ENCODE measurements at regions of chr11 and their contacts with region 1.

Region 1: DNA sequence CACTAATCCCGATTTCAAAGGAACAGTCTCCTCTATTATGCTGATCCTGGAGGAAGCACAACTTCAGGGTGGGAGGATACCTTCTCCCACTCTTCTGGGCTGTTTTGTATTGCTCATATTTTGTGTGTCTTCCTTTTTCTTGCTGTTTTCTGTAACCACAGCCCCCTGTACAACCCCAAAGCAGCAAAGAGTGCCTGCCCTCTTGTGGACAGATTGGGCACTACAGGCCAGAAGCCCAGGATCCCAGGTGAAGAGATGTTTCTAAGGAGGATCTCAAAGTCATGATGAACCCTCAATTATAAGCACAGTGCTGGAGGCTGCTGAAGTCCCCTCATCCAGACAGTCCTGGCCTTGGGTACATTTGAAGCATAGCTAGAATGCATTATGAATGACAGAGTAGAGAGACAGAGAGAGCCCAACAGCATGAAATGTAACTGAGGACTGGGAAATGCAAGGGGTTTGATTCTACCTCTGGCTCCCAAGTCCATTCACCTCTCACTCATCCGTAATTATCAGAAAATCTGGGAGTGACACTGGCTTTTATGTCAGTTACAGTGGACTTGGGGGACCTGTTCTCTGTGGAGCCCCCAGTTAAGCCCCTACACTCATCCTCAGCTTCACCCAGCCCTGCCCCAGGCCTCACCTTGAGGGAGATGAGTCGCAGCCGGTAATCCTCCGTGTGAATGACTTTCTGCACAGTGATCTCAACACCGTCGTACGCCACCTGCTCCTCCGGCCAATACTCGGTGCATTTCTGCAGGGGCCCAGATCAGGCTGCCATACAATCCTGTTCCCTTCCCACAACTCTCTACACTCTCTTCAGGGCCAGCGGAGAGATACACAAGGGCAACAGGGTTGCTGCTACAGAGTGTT is 6.2 kb upstream of the IGSF22 start:
- DNase-seq: peak in 1 of 2 experiments; percentile 90
- H3K4me3 ChIP-seq: no peak overlapping the region
- H3K27ac ChIP-seq: no peak overlapping the region
- H3K4me1 ChIP-seq: peaks cover 0 to 9% (median 3%) of the 10 kb centered on the region in 4 experiments; a peak in 5 of 7 replicates
- H3K27me3 ChIP-seq: no peaks in the 10 kb centered on the region
- CTCF ChIP-seq: peak; percentile 82 to 91 (median 86)
- EP300 ChIP-seq: no peak
- POLR2A ChIP-seq: no peak
- RAD21 ChIP-seq: peak; percentile 71 to 81

Region 2: GRCh38 chr11:18540207-18541009 is 191.8 kb before region 1 on chr11:
- CTCF ChIA-PET with region 1: interaction called, 10 read pairs
- POLR2A ChIA-PET with region 1: no interaction called
- DNase-seq: no peak
- H3K4me3 ChIP-seq: no peak overlapping the region
- H3K27ac ChIP-seq: no peak overlapping the region
- H3K4me1 ChIP-seq: no peaks in the 10 kb centered on the region
- H3K27me3 ChIP-seq: no peaks in the 10 kb centered on the region
- CTCF ChIP-seq: peak in 1 of 3 experiments; percentile 16; a peak in 1 of 4 replicates
- EP300 ChIP-seq: no peak
- POLR2A ChIP-seq: no peak
- RAD21 ChIP-seq: peak; percentile 48 to 55

Region 3: DNA sequence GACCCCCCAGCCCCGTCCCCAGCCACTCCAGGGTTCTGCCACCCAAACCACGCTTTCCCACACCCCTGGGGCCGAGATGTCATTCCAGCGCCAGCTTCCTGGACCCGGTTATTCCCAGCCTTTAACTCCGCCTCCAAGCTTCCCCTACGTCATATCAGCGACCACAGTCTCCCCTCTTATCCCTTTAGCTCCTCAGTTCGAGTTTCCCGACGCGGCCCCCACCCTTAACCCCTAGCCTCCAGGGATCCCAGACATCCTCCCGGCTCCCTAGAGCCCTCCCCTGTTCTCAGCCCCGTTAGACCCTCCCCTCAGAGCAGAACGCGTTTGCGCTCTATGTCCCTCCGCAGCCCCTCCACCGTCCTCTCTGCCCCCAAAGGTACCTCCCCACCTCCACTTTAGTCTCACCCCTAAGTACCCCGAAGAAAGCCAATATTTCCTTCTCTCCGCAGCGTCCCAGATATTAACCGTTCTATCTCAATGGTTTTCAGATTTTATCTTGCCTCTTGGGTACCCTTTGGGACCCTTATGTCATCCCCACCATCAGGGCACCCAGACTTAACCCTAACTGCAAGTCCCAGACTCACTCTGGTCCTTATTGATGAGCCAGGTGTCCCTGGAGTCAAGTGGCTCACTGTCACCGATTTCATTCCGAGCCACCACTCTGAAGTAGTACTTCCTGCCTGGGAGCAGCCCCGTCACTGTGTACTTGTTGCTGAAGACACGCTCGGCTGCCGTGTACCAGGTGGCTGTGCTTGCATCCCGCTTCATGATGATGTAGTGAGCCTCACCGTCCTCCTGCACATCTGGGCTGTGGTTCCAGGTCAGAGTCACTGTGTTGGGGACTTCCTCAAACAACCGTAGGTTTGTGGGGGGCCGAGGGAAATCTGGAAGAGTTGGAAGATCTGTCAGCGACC is 25.6 kb before region 1 on chr11:
- CTCF ChIA-PET with region 1: interaction called, 15 read pairs
- POLR2A ChIA-PET with region 1: no interaction called
- DNase-seq: no peak
- H3K4me3 ChIP-seq: peak overlapping the region in 3 of 4 experiments; percentile 32 to 55 (median 35); a peak in 7 of 8 replicates
- H3K27ac ChIP-seq: no peak overlapping the region
- H3K4me1 ChIP-seq: no peaks in the 10 kb centered on the region
- H3K27me3 ChIP-seq: peaks cover 0 to 2% (median 0%) of the 10 kb centered on the region in 4 experiments; a peak in 3 of 7 replicates
- CTCF ChIP-seq: no peak
- EP300 ChIP-seq: no peak
- POLR2A ChIP-seq: no peak
- RAD21 ChIP-seq: no peak

Region 4: DNA sequence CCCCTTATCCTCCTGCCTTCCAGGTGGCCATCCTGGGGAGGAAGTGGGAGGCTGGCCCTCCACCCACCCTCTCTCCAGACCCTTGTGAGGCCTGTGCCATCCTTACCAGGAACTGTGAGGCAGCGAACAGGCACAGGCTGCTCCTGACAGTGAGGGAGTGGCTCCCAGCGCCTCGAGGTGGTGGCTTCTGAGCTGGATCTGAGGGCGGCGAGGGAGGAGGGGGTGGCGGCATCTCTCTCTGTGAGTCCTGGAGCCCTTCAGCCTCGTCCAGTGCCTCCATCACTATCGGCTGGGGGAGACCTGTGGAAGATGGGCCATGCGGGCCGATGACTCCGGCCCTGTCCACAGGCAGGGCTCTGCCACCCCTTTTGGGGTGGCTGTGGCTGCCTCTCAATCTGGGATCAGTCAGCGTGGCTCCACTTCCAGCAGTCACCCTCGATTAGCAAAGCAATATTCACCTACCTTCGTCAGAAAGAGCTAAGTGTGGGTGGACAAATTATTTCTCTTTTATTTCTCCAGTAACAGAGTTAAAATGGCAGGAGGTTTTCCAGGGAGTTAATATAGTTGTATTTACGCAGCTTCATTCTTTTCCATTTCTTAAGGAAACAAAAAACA is 11.8 kb after region 1 on chr11:
- CTCF ChIA-PET with region 1: interaction called, 225 read pairs
- POLR2A ChIA-PET with region 1: interaction called, 3 read pairs
- DNase-seq: no peak
- H3K4me3 ChIP-seq: no peak overlapping the region
- H3K27ac ChIP-seq: no peak overlapping the region
- H3K4me1 ChIP-seq: no peaks in the 10 kb centered on the region; a peak in 1 of 7 replicates
- H3K27me3 ChIP-seq: no peaks in the 10 kb centered on the region
- CTCF ChIP-seq: no peak
- EP300 ChIP-seq: no peak
- POLR2A ChIP-seq: no peak
- RAD21 ChIP-seq: no peak

Region 5: DNA sequence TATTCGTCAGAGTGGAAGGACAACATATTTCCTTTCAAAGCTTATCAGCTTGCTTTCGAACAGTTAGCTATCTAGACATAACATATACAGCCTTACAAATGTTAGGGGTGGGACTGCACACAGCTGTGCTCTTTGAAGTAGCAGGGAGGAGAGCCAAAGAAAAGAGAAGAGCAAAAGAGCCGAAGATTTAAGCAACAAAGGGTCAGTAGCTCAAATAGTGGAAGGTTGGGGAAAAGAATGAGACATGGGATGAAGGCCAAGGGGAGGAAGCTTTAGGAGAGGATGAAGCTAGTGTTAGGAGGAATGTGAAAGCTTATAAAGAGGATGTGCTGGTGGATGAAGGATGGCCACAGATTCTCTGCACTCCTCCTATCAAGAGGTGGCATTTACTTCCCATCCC is 25.6 kb after region 1 on chr11:
- CTCF ChIA-PET with region 1: interaction called, 244 read pairs
- POLR2A ChIA-PET with region 1: no interaction called
- DNase-seq: no peak
- H3K4me3 ChIP-seq: no peak overlapping the region
- H3K27ac ChIP-seq: no peak overlapping the region
- H3K4me1 ChIP-seq: no peaks in the 10 kb centered on the region
- H3K27me3 ChIP-seq: no peaks in the 10 kb centered on the region
- CTCF ChIP-seq: no peak
- EP300 ChIP-seq: no peak
- POLR2A ChIP-seq: no peak
- RAD21 ChIP-seq: no peak

Region 6: GRCh38 chr11:18865951-18866350 is 133.8 kb after region 1 on chr11:
- CTCF ChIA-PET with region 1: no interaction called
- POLR2A ChIA-PET with region 1: no interaction called
- DNase-seq: peak in 1 of 2 experiments; percentile 46
- H3K4me3 ChIP-seq: peak overlapping the region in 1 of 4 experiments; percentile 26; a peak in 1 of 8 replicates
- H3K27ac ChIP-seq: peak overlapping the region; percentile 0; the same call in 1 of the 2 replicates
- H3K4me1 ChIP-seq: peaks cover 0 to 12% (median 6%) of the 10 kb centered on the region in 4 experiments; a peak in 4 of 7 replicates
- H3K27me3 ChIP-seq: no peaks in the 10 kb centered on the region
- CTCF ChIP-seq: no peak
- EP300 ChIP-seq: peak in 1 of 2 experiments; percentile 62; a peak in 1 of 3 replicates
- POLR2A ChIP-seq: peak in 1 of 2 experiments; percentile 25; a peak in 1 of 3 replicates
- RAD21 ChIP-seq: no peak